ENCODE measurements at regions of chr2 and their contacts with region 1.

Region 1: DNA sequence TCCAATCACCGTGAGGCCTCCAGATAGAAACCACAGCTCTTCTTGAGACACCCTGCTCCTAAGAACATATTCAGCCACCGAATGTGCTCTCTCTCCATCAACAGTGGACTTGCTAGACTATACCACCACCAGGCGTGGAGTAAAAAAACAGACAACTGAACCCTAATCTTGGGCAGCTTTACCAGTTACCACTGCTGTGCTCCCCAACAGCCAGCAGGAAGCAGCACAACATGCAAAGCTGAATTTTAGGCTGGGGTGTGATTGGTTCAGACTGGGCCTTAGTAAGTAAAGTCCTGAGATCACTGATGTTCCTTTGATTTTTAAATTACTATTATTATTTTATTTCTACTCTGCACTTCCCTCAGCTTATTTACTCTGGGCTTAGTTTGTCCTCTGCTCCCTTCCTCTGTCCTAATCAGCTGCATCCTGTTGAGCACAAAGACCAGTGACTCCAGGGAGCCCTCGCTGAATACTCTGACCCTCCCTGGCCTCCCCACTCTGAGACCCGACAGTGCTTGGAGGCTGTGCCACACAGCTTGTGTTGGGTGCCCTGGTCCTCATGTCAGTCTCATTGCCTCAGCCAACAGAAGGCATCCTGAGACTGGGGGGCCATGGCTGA is 21.9 kb downstream of the MRPL35 start:
- DNase-seq: no peak
- H3K4me3 ChIP-seq: no peak overlapping the region
- H3K27ac ChIP-seq: peak overlapping the region; percentile 89 to 93
- H3K4me1 ChIP-seq: peaks cover 25 to 37% of the 10 kb centered on the region in 2 donors
- H3K27me3 ChIP-seq: no peaks in the 10 kb centered on the region
- CTCF ChIP-seq: peak; percentile 79 to 97 (median 91)

Region 2: GRCh38 chr2:86195055-86195807 is 25.9 kb before region 1 on chr2 and contains the start of gene IMMT:
- intact Hi-C with region 1: loop called (anchors 2 kb)
- DNase-seq: peak; percentile 67 to 95
- H3K4me3 ChIP-seq: peak within 1 kb of the TSS; percentile 89 to 91
- H3K27ac ChIP-seq: peak within 1 kb of the TSS; percentile 99
- H3K4me1 ChIP-seq: peaks cover 6 to 41% of the 10 kb centered on the region in 2 donors
- H3K27me3 ChIP-seq: no peaks in the 10 kb centered on the region
- CTCF ChIP-seq: no peak
- total RNA-seq, gene IMMT: 97.1 TPM

Region 3: DNA sequence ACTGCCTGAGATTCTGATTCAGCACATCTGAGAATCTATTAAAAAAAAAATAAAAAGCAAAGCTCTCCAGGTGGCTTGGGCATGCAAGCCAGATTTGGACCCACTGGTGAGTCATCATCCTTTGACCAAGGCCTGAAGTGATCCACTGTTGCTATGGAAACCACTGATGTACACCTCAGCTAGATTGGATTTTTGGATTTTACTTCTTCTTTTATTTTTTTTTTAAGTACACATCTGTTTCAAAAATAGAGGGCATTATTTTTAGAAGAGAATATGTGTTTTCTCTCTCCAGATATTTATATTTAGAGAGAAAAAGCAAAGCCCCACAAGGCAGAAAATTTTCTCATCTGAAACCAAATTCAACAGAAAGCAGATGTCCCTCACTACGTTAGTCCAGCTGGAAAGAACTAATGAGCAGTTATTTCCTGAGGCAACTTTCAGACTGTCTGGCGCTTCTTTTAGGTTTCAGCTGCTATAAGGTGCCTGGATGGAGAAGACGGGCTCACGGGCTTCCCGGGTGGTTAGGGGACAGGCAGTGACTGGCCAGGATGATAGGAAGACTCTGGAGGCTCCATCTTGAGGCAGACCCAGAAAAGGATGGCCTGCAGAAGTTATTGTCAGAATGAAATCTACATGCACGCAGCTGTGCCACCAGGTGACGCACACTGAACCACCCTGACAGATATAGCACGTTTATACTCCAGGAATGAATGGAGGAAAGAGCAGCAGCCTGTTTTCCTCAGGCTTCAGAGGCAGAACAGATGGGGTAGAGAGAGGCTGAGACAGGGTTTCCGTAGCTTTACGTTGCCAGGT is 28.6 kb after region 1 on chr2:
- intact Hi-C with region 1: loop called (anchors 2 kb)
- DNase-seq: peak; percentile 37 to 84
- H3K4me3 ChIP-seq: no peak overlapping the region
- H3K27ac ChIP-seq: peak overlapping the region; percentile 67 to 85
- H3K4me1 ChIP-seq: peaks cover 6 to 12% of the 10 kb centered on the region in 2 donors
- H3K27me3 ChIP-seq: no peaks in the 10 kb centered on the region
- CTCF ChIP-seq: peak in 2 of 3 experiments; percentile 8 to 19

Region 4: DNA sequence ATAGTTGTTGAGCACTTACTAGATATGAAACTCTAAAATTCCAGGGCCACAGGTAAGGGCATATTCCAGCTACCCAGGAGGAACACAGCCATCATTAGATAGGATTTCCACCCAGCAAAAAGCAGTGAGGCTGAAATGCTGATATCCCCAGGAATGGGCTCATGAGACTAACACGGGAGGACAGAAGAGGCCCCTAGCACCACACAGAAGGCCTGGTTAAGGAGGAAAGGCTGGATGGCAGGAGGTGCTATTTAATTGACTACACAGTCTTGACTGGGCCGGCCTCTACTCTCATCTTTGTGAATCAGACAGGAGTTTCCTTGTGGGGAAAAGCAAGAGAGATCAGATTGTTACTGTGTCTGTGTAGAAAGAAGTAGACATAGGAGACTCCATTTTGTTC is 39.8 kb after region 1 on chr2:
- intact Hi-C with region 1: no loop called
- DNase-seq: no peak
- H3K4me3 ChIP-seq: no peak overlapping the region
- H3K27ac ChIP-seq: no peak overlapping the region
- H3K4me1 ChIP-seq: no peaks in the 10 kb centered on the region
- H3K27me3 ChIP-seq: no peaks in the 10 kb centered on the region
- CTCF ChIP-seq: no peak

Region 5: GRCh38 chr2:86298411-86299379 is 77.5 kb after region 1 on chr2:
- intact Hi-C with region 1: loop called (anchors 5 kb)
- DNase-seq: no peak
- H3K4me3 ChIP-seq: no peak overlapping the region
- H3K27ac ChIP-seq: peak overlapping the region; percentile 70 to 85
- H3K4me1 ChIP-seq: peaks cover 12 to 29% of the 10 kb centered on the region in 2 donors
- H3K27me3 ChIP-seq: no peaks in the 10 kb centered on the region
- CTCF ChIP-seq: peak in 1 of 3 experiments; percentile 36

Region 6: DNA sequence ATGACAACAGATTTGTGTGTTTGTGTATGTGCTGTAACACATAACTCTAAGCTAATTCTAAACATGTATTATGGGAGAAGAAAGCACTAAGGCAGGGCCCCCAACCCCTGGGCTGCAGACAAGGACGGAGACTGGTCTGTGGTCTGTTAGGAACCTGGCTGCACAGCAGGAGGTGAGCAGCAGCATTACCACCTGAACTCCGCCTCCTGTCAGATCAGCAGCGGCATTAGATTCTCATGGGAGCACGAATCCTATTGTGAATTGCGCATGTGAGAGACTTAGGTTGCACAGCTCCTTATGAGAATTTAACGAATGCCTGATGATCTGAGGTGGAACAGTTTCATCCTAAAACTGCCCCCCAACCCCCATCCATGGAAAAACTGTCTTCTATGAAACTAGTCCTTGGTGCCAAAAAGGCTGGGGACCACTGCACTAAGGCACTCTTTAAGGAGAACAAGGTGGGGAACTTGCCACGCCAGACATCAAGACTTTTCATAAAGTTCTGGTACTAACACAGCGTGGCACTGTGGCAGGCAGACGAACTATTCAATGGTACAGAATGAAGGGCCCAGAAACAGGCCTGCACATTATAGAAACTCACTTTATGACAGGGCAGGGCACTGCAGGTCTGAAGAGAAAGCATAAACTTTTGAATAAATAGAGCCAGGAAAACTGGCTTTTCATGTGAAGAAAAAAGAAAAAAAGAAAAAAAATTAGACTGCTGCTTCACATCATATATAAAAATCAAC is 102.3 kb after region 1 on chr2:
- intact Hi-C with region 1: no loop called
- DNase-seq: no peak
- H3K4me3 ChIP-seq: no peak overlapping the region
- H3K27ac ChIP-seq: no peak overlapping the region
- H3K4me1 ChIP-seq: no peaks in the 10 kb centered on the region
- H3K27me3 ChIP-seq: no peaks in the 10 kb centered on the region
- CTCF ChIP-seq: no peak

Region 7: GRCh38 chr2:86368161-86368824 is 147.1 kb after region 1 on chr2:
- intact Hi-C with region 1: loop called (anchors 1 kb)
- DNase-seq: peak in 1 of 2 donors; percentile 63
- H3K4me3 ChIP-seq: peak overlapping the region in 1 of 2 donors; percentile 28
- H3K27ac ChIP-seq: no peak overlapping the region
- H3K4me1 ChIP-seq: no peaks in the 10 kb centered on the region
- H3K27me3 ChIP-seq: no peaks in the 10 kb centered on the region
- CTCF ChIP-seq: peak; percentile 41 to 71 (median 47)

Region 8: DNA sequence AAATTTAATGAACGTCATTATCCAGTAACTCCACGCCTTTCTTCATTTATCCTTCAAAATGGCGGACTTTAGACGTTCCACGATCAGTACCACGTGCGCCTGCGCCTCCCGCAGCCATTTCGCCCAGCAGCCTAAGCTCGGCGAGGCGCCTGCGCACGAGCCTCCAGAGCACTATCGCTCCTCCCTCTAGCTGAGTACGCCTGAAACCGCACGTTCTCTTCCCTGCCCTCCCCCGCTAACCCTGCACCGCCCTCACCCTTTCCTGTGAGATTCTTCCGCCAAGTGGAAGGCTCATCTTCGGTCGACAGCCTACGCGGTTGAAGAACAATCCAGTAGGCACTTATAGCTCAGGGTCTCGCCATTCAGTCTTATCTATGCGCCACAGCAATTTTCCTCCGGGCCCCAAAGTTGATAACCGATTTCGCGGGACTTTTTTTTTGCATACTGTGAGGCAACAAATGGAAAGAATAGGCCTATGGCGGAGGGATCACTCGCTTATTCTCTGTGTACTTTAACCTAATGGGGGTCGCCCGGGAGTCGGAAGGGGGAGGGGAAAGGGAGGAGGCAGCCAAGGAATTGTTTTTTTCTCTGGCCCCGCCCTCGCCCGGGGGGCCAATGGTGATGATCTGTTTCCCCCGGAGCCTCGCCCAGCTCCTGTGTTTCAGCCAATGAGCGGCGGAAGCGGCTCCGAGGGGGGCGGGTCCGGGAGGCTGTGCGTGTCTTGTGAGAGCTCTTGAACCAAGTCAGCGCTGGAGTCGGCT is 219.6 kb after region 1 on chr2 and contains the start of gene KDM3A:
- intact Hi-C with region 1: loop called (anchors 2 kb)
- DNase-seq: peak; percentile 100
- H3K4me3 ChIP-seq: peak within 1 kb of the TSS; percentile 88 to 97
- H3K27ac ChIP-seq: peak within 1 kb of the TSS; percentile 94 to 99
- H3K4me1 ChIP-seq: peaks cover 3 to 30% of the 10 kb centered on the region in 2 donors
- H3K27me3 ChIP-seq: no peaks in the 10 kb centered on the region
- CTCF ChIP-seq: no peak
- total RNA-seq, gene KDM3A: 18.4 TPM

Measured in ascending aorta (tissue), 2 donors.